Natural killer cell (primary cell): ENCODE measurements at regions of chr6 and their contacts with region 1.

Region 1: GRCh38 chr6:118283766-118284165 is 264.3 kb upstream of the PLN start:
- DNase-seq: peak in 1 of 2 donors; percentile 76
- ATAC-seq: peak in 2 of 3 donors; percentile 44 to 70
- H3K4me3 ChIP-seq: no peak overlapping the region
- H3K4me3 Mint-ChIP-seq: no peak overlapping the region
- H3K27ac ChIP-seq: no peak overlapping the region
- H3K27ac Mint-ChIP-seq: no peak overlapping the region
- H3K4me1 ChIP-seq: no peaks in the 10 kb centered on the region
- H3K4me1 Mint-ChIP-seq: peaks cover 0 to 8% of the 10 kb centered on the region in 2 donors
- H3K27me3 ChIP-seq: no peaks in the 10 kb centered on the region
- H3K27me3 Mint-ChIP-seq: peaks cover 24 to 36% of the 10 kb centered on the region in 2 donors
- CTCF ChIP-seq: peak; percentile 65

Region 2: DNA sequence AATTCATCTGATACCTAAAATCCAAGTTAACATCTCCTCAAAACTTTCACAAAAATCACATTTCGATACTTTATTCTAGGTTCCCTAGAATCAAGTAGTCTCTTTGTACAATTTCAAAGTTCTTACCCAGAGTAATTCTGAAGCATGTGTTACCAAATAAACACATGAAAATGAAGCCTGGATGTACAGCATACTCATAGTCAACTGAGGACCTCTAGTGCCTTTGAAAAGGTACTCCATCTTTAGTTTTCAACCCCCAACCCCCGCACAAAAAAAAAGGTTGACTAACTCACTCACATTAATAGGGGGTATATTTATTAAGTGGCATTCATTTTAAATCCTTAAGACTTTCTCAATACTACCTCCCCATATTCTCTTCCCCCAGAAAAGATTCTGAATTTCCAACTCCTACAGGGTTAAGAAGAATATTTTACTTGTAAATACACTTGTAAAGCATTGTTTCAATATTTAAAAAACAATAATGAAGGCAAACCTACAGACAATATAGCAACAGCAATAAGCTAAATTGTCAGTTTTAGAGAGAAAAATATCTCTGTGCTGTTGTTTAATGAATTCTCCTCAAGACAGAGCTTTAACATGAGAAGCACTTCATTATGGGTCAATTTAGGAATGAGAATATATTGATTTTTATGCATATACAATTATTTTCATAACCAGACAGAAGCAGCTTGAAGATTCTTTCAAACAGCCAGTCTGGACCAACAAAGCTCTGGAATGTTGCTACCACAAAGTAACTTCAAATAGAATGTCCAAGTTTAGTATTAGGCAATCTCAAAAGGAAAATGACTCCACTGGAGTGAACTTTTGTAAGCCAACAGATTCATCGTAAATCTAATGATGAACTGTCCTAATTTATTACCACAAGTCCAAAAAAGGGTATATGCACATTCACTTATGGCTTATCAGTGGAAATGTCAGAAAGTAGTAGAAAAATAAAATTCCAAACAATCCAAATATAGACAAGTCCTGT is 267.6 kb after region 1 on chr6:
- intact Hi-C with region 1: loop called (anchors 2 kb)
- DNase-seq: peak in 1 of 2 donors; percentile 72
- ATAC-seq: peak; percentile 75 to 94 (median 91)
- H3K4me3 ChIP-seq: no peak overlapping the region
- H3K4me3 Mint-ChIP-seq: no peak overlapping the region
- H3K27ac ChIP-seq: no peak overlapping the region
- H3K27ac Mint-ChIP-seq: peak overlapping the region in 1 of 2 donors; percentile 80
- H3K4me1 ChIP-seq: no peaks in the 10 kb centered on the region
- H3K4me1 Mint-ChIP-seq: peaks cover 19 to 25% of the 10 kb centered on the region in 2 donors
- H3K27me3 ChIP-seq: no peaks in the 10 kb centered on the region
- H3K27me3 Mint-ChIP-seq: no peaks in the 10 kb centered on the region
- CTCF ChIP-seq: peak; percentile 70

Region 3: GRCh38 chr6:118580585-118581419 is 297.0 kb after region 1 on chr6:
- intact Hi-C with region 1: loop called (anchors 1 kb)
- DNase-seq: peak in 1 of 2 donors; percentile 77
- ATAC-seq: peak; percentile 79 to 92 (median 80)
- H3K4me3 ChIP-seq: no peak overlapping the region
- H3K4me3 Mint-ChIP-seq: peak overlapping the region; percentile 26
- H3K27ac ChIP-seq: no peak overlapping the region
- H3K27ac Mint-ChIP-seq: peak overlapping the region; percentile 28 to 72
- H3K4me1 ChIP-seq: peaks cover 5% of the 10 kb centered on the region
- H3K4me1 Mint-ChIP-seq: peaks cover 17 to 34% of the 10 kb centered on the region in 2 donors
- H3K27me3 ChIP-seq: no peaks in the 10 kb centered on the region
- H3K27me3 Mint-ChIP-seq: no peaks in the 10 kb centered on the region
- CTCF ChIP-seq: peak; percentile 71

Region 4: GRCh38 chr6:118618679-118619377 is 335.1 kb after region 1 on chr6:
- intact Hi-C with region 1: loop called (anchors 1 kb)
- DNase-seq: peak; percentile 56 to 79
- ATAC-seq: peak; percentile 81 to 98 (median 95)
- H3K4me3 ChIP-seq: no peak overlapping the region
- H3K4me3 Mint-ChIP-seq: no peak overlapping the region
- H3K27ac ChIP-seq: no peak overlapping the region
- H3K27ac Mint-ChIP-seq: peak overlapping the region in 1 of 2 donors; percentile 21
- H3K4me1 ChIP-seq: peaks cover 6% of the 10 kb centered on the region
- H3K4me1 Mint-ChIP-seq: peaks cover 47 to 56% of the 10 kb centered on the region in 2 donors
- H3K27me3 ChIP-seq: no peaks in the 10 kb centered on the region
- H3K27me3 Mint-ChIP-seq: no peaks in the 10 kb centered on the region
- CTCF ChIP-seq: peak; percentile 75

Region 5: DNA sequence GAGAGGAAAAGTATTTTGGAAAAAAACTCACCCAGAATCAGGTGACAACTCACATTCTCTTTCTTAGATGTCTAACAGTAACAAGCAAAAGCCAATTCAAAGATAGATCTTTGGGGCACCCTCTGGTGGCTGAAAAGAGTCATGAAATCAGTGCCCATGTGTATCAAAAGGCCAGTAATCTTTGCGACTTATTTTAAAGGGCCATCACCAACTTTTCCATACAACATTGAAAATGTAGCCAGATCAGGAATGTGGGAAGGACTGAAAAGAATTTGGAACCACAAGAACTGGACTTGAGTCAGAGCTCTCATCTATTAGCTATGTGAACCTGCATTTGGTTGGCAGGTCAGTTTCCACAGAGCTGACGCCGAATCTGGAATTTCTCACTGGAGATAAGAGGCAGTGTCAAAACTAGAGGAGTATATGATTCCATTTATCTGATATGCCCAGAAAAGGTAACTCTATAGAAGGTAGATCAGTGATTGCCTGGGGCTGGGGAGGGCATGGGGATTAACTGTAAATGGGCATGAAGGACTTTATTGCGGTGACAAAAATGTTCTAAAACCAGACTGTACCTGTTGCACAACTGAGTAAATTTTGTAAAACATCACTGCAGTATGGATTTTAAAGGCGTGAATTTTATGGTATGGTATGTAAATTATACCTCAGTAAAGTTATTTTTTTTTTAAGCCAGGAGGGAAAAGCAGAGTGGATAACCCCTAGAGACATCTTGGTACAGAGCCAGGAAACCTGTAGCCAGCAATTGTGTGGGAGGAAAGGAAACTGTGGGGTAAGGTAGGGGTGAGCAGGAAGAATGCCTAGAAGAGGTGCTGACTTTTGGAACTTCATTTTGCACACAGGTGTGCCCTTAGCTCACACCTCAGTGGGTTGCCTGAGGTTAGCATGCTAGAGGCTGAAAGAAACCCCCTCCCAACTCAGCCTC is 493.1 kb after region 1 on chr6:
- intact Hi-C with region 1: loop called (anchors 1 kb)
- DNase-seq: peak; percentile 36 to 84
- ATAC-seq: peak; percentile 83 to 92 (median 85)
- H3K4me3 ChIP-seq: no peak overlapping the region
- H3K4me3 Mint-ChIP-seq: no peak overlapping the region
- H3K27ac ChIP-seq: no peak overlapping the region
- H3K27ac Mint-ChIP-seq: no peak overlapping the region
- H3K4me1 ChIP-seq: no peaks in the 10 kb centered on the region
- H3K4me1 Mint-ChIP-seq: peaks cover 6% of the 10 kb centered on the region in 2 donors
- H3K27me3 ChIP-seq: no peaks in the 10 kb centered on the region
- H3K27me3 Mint-ChIP-seq: peaks cover 0 to 3% of the 10 kb centered on the region in 2 donors
- CTCF ChIP-seq: peak; percentile 82

Region 6: GRCh38 chr6:119110601-119111548 is 827.1 kb after region 1 on chr6:
- intact Hi-C with region 1: loop called (anchors 5 kb)
- DNase-seq: peak in 1 of 2 donors; percentile 83
- ATAC-seq: peak; percentile 60 to 66 (median 64)
- H3K4me3 ChIP-seq: no peak overlapping the region
- H3K4me3 Mint-ChIP-seq: no peak overlapping the region
- H3K27ac ChIP-seq: no peak overlapping the region
- H3K27ac Mint-ChIP-seq: no peak overlapping the region
- H3K4me1 ChIP-seq: no peaks in the 10 kb centered on the region
- H3K4me1 Mint-ChIP-seq: no peaks in the 10 kb centered on the region
- H3K27me3 ChIP-seq: no peaks in the 10 kb centered on the region
- H3K27me3 Mint-ChIP-seq: peaks cover 14 to 27% of the 10 kb centered on the region in 2 donors
- CTCF ChIP-seq: peak; percentile 51